ENCODE measurements at regions of chr20 and their contacts with region 1.

Region 1: DNA sequence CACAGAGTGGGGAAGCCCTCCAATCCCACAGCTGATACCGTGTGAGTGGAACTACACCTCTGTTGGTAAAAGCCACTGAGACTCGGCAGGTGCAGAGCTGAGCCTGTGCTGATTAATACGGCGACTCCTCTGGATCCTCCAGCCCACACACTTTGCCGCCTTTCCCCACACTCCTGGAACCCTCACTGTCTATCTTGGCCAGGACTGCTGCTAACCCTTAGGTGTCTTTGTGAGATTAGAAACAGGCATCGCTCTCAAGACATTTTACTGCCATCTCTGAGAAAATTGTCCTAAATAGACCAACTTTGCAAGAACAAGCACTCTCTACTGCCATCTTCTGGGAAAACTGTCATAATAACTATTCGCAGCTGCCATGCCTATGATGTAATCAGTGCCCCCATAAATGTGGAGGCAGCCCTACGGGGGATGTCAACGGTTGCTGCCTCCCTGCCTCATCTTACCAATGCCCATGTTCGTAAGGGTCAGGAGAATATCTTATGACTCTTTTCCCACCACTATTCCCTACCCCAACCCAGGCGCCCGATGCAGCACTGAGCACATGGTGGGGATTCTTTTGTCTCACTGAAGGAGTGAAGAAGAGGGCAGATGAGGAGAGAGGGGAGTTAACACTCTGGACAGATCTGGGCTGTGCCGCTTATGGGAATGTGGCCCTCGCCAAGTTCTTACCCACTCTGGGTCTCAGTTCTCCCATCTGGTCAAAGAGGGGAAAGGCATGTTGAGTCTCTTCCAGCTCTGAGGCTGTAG is 26.1 kb upstream of the KCNB1 start:
- DNase-seq: peak; percentile 12
- H3K4me3 ChIP-seq: no peak overlapping the region
- H3K27ac ChIP-seq: no peak overlapping the region
- H3K4me1 ChIP-seq: no peaks in the 10 kb centered on the region
- H3K27me3 ChIP-seq: peaks cover 2% of the 10 kb centered on the region
- CTCF ChIP-seq: peak; percentile 54 to 63

Region 2: DNA sequence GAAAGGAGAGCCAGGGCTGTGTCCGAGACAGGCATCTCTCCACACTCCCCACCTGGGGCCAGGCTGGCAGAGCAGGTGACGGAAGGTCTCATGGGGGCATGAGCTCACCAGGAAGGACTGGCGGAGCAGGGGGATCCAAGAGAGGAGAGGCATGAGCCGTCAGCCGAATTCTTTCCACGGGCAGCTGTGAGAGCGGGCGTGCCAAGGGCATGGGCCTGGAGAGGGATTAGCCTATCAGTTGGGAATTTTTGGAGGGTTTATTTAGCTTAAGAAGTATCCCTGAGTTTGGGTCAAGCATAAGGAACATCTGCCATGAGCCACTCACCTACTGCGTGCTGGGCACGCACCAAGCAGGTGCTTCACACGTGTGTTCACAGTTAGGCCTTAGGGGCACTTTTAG is 170.6 kb before region 1 on chr20:
- CTCF ChIA-PET with region 1: no interaction called
- dilution Hi-C with region 1: no loop called
- in situ Hi-C with region 1: no loop called
- intact Hi-C with region 1: loop called (anchors 1 kb)
- DNase-seq: no peak
- H3K4me3 ChIP-seq: no peak overlapping the region
- H3K27ac ChIP-seq: no peak overlapping the region
- H3K4me1 ChIP-seq: no peaks in the 10 kb centered on the region
- H3K27me3 ChIP-seq: no peaks in the 10 kb centered on the region
- CTCF ChIP-seq: no peak

Measured in mammary epithelial cell (primary cell).